ENCODE measurements at regions of chr12 and their contacts with region 1.

Region 1: GRCh38 chr12:57261428-57261865 is 10.5 kb upstream of the STAC3 start:
- DNase-seq: no peak
- H3K4me3 ChIP-seq: no peak overlapping the region
- H3K27ac ChIP-seq: no peak overlapping the region
- H3K4me1 ChIP-seq: peaks cover 3 to 12% (median 5%) of the 10 kb centered on the region in 6 donors
- H3K27me3 ChIP-seq: no peaks in the 10 kb centered on the region
- CTCF ChIP-seq: no peak
- POLR2A ChIP-seq: no peak

Region 2: DNA sequence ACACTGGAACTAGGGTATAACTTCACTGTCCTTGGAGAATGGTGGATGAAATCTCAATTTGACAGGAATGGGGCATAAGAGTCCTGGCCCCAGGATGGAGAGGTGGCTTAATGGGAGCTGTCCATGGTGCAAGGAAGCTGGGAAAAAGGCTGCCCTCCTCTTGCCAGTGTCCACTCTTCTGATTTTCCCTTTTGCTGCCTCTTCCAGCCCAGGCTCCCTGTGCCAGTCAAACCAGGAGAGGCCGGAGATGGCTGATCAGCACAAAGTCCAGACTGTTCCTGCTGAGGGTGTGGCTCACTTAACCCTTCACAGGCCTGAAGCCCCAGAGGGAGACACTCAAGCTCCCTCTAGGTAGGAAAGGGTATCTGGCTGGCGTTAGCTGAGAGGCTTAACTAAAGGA is 211.6 kb before region 1 on chr12 and contains the start of gene MYO1A:
- intact Hi-C with region 1: no loop called
- DNase-seq: no peak
- H3K4me3 ChIP-seq: no peak within 1 kb of the TSS
- H3K27ac ChIP-seq: no peak within 1 kb of the TSS
- H3K4me1 ChIP-seq: peaks cover 0 to 40% (median 28%) of the 10 kb centered on the region in 6 donors
- H3K27me3 ChIP-seq: no peaks in the 10 kb centered on the region
- CTCF ChIP-seq: no peak
- POLR2A ChIP-seq: no peak
- total RNA-seq, gene MYO1A: 0.14 to 1.4 (median 0.48) TPM in 6 of 7 donors, not detected in the other

Region 3: GRCh38 chr12:57360468-57360867 is 99.0 kb after region 1 on chr12:
- intact Hi-C with region 1: no loop called
- DNase-seq: no peak
- H3K4me3 ChIP-seq: no peak overlapping the region
- H3K27ac ChIP-seq: no peak overlapping the region
- H3K4me1 ChIP-seq: no peaks in the 10 kb centered on the region
- H3K27me3 ChIP-seq: no peaks in the 10 kb centered on the region
- CTCF ChIP-seq: no peak
- POLR2A ChIP-seq: no peak

Region 4: DNA sequence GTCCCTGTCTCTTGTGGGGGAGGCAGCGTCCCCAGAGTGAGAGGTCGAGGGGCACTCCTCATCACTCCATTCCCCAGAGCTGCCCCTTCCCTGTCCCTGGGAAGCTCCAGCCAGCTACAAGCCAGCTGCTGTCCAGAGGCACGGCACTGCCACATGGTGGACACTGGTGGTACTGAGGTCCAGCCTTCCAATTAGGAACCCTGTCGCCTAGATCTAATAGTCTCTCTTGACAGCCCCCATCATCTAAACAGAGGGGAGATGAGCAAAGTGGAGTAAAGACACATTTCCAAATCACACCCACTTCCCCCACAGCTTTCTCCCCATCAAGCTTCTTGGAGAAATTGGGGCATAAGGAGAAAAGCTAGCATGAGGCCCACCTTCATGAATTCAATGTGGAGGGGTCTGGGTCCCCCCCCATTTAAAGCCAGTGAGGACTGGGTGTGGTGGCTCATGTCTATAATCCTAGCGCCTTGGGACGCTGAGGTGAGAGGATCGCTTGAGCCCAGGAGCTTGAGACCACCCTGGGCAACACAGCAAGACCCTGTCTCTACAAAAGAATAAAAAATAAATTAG is 191.6 kb after region 1 on chr12:
- intact Hi-C with region 1: loop called (anchors 5 kb)
- DNase-seq: peak; percentile 90
- H3K4me3 ChIP-seq: no peak overlapping the region
- H3K27ac ChIP-seq: no peak overlapping the region
- H3K4me1 ChIP-seq: peaks cover 0 to 23% (median 4%) of the 10 kb centered on the region in 6 donors
- H3K27me3 ChIP-seq: peaks cover 0 to 7% (median 0%) of the 10 kb centered on the region in 7 donors
- CTCF ChIP-seq: peak; percentile 67 to 87 (median 83)
- POLR2A ChIP-seq: no peak

Measured in spleen (tissue), 13 donors.